Endothelial cell of umbilical vein (primary cell): ENCODE measurements at regions of chr1 and their contacts with region 1.

Region 1: DNA sequence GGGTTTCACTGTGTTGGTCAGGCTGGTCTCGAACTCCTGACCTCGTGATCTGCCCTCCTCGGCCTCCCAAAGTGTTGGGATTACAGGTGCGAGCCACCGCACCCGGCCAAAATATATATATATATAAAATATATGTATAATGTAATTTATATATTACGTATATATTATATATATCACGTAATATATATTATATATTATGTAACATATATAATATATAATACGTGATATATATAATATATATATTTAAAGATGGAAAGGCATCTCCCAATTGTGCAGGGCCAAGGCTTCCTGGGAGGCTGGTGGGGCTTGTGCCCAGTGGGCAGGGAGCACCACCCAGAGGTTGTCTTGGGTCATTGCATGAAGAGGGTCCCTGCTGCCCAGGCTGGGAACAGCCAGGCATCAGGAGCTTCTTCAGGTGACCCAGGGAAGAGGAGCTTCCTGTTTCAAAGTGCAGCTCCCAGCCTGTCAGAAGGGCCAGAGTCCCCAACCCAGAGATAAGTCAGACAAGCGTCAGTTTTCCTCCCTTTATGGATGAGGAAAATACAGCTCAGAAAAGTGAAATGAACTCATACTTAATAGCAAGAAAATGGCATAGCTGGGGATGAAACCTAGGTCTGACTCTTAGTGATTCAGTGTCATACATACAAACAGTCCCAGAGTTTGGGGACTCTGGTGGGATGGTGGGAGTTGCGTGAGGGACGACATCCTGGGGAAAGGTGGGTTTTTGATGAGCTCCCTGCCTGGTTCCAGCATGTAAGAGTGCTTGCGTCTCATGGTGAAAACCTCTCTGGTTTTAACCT is 12.0 kb downstream of the UBE2Q1 start:
- DNase-seq: peak; percentile 73
- H3K4me3 ChIP-seq: no peak overlapping the region
- H3K27ac ChIP-seq: no peak overlapping the region
- H3K4me1 ChIP-seq: peaks cover 6% of the 10 kb centered on the region
- H3K27me3 ChIP-seq: no peaks in the 10 kb centered on the region
- CTCF ChIP-seq: peak; percentile 74 to 88
- POLR2A ChIP-seq: no peak

Region 2: GRCh38 chr1:154324669-154325582 is 221.5 kb before region 1 on chr1 and contains the start of gene ATP8B2:
- CTCF ChIA-PET with region 1: interaction called, 5 read pairs
- POLR2A ChIA-PET with region 1: no interaction called
- dilution Hi-C with region 1: no loop called
- intact Hi-C with region 1: loop called (anchors 2 kb)
- DNase-seq: peak; percentile 79
- H3K4me3 ChIP-seq: peak within 1 kb of the TSS; percentile 78 to 88 (median 85)
- H3K27ac ChIP-seq: peak within 1 kb of the TSS; percentile 52
- H3K4me1 ChIP-seq: peaks cover 22% of the 10 kb centered on the region
- H3K27me3 ChIP-seq: peaks cover 0 to 8% of the 10 kb centered on the region in 2 experiments
- CTCF ChIP-seq: peak; percentile 93 to 94
- POLR2A ChIP-seq: no peak
- total RNA-seq, gene ATP8B2: 60.0 and 64.7 TPM in 2 replicates

Region 3: DNA sequence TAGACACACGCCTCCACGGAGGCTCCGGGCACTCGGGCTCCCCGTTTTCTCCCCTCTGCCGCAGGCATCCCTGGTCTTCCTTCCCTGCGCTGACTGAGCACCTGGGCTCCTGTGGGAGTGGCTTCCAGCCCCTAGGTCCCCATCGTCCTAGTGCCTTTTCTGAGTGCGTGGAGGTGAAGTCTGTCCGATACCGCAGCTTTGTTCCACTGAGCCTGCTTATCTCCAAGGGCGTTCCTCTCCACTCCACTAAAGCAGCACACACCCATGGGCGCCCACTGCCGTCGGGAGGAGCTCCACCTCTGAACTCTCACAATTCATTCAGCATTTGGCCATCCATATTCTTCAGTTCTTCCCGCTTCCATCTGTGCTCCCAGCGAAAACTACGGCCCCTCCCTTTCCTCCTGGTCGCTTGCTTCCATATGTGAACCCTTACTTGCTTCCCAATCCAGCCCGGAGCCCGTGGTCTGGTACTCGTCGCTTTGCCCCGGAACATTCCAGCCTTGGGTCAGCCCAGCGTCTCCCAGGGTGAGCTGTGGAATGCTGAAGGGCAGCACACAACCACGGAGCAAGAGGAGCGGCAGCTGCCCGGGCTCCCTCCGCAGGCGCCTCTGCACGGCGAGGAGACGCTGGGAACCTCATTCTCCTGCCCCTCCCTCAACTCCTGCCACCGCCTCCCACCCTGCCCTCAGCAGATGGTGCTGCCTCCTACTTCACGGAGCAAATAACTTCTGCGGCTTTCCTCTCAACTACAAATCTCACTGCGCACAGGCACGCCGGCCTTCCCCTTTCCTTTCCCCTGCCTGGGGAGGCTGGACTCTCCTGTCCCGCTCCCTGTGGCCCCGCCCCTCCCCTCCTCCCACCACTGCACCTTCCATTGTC is 193.6 kb before region 1 on chr1:
- CTCF ChIA-PET with region 1: interaction called, 13 read pairs
- POLR2A ChIA-PET with region 1: no interaction called
- dilution Hi-C with region 1: no loop called
- intact Hi-C with region 1: loop called (anchors 1 kb)
- DNase-seq: peak; percentile 56
- H3K4me3 ChIP-seq: peak overlapping the region in 2 of 3 experiments; percentile 19 to 46
- H3K27ac ChIP-seq: no peak overlapping the region
- H3K4me1 ChIP-seq: peaks cover 14% of the 10 kb centered on the region
- H3K27me3 ChIP-seq: no peaks in the 10 kb centered on the region
- CTCF ChIP-seq: peak in 1 of 2 donors; percentile 1
- POLR2A ChIP-seq: no peak

Region 4: DNA sequence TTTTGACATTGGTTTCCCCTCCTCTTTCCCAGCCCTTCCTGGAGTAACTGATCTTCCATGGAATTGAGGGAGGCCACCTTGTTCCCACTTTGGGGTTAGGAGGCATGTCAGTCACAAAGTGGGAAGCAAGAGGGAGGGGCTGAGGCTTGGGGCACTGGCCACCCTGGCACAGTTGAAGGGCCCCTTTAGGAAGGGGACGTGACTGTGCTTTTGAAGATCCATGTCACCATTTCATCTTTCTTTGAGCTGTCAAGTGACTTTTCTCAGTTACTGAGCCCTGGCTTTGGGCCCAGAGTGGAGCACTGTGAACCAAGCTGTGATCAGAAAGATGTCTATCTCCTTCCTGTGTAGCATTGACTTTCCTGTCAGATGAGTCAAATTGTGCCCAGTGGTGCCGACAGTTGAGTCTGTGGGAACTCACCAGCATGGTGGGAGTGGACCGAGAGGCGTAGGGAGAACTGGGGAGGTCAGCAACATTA is 82.9 kb before region 1 on chr1:
- CTCF ChIA-PET with region 1: interaction called, 15 read pairs
- POLR2A ChIA-PET with region 1: no interaction called
- dilution Hi-C with region 1: no loop called
- intact Hi-C with region 1: no loop called
- DNase-seq: peak; percentile 31
- H3K4me3 ChIP-seq: no peak overlapping the region
- H3K27ac ChIP-seq: peak overlapping the region; percentile 34
- H3K4me1 ChIP-seq: peaks cover 8% of the 10 kb centered on the region
- H3K27me3 ChIP-seq: no peaks in the 10 kb centered on the region
- CTCF ChIP-seq: no peak
- POLR2A ChIP-seq: no peak

Region 5: DNA sequence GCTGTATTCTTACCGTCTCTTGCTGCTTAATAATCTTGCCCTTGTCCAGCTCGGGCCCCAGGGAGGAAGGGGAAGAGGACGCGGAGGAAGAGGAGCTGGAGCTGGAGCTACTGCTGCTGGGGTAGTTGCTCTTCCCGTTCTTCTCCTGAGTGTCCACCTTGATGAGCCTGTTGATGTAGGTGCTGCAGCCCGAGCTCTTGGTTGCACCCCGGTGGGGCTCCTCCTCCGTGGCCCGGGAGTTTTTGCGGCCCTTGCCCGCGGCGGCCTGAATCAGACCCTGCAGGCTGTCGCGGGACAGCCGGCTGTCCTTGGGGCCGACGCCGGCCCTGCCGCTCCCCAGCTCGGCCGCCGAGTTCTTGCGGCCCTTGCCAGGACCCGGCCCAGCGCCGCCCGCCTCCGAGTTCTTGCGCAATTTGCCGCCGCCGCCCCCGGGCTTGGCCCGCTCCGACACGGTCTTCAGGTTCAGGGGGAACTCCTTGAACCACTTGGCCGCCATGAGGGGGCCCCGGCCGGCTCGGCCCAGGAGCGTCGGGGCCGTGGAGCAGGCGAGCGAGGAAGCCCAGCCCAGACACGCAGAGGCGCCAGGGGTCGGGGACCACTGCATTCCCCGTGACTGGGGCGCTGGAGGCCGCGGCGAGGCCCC is 44.9 kb before region 1 on chr1:
- CTCF ChIA-PET with region 1: interaction called, 66 read pairs
- POLR2A ChIA-PET with region 1: interaction called, 4 read pairs
- dilution Hi-C with region 1: no loop called
- intact Hi-C with region 1: loop called (anchors 1 kb)
- DNase-seq: peak; percentile 43
- H3K4me3 ChIP-seq: peak overlapping the region; percentile 73 to 99 (median 88)
- H3K27ac ChIP-seq: peak overlapping the region; percentile 74
- H3K4me1 ChIP-seq: peaks cover 34% of the 10 kb centered on the region
- H3K27me3 ChIP-seq: no peaks in the 10 kb centered on the region
- CTCF ChIP-seq: no peak
- POLR2A ChIP-seq: no peak

Region 6: GRCh38 chr1:154533952-154534844 is 12.3 kb before region 1 on chr1:
- CTCF ChIA-PET with region 1: interaction called, 19 read pairs
- POLR2A ChIA-PET with region 1: no interaction called
- dilution Hi-C with region 1: no loop called
- intact Hi-C with region 1: no loop called
- DNase-seq: no peak
- H3K4me3 ChIP-seq: no peak overlapping the region
- H3K27ac ChIP-seq: no peak overlapping the region
- H3K4me1 ChIP-seq: no peaks in the 10 kb centered on the region
- H3K27me3 ChIP-seq: no peaks in the 10 kb centered on the region
- CTCF ChIP-seq: peak; percentile 14 to 27
- POLR2A ChIP-seq: no peak

Region 7: DNA sequence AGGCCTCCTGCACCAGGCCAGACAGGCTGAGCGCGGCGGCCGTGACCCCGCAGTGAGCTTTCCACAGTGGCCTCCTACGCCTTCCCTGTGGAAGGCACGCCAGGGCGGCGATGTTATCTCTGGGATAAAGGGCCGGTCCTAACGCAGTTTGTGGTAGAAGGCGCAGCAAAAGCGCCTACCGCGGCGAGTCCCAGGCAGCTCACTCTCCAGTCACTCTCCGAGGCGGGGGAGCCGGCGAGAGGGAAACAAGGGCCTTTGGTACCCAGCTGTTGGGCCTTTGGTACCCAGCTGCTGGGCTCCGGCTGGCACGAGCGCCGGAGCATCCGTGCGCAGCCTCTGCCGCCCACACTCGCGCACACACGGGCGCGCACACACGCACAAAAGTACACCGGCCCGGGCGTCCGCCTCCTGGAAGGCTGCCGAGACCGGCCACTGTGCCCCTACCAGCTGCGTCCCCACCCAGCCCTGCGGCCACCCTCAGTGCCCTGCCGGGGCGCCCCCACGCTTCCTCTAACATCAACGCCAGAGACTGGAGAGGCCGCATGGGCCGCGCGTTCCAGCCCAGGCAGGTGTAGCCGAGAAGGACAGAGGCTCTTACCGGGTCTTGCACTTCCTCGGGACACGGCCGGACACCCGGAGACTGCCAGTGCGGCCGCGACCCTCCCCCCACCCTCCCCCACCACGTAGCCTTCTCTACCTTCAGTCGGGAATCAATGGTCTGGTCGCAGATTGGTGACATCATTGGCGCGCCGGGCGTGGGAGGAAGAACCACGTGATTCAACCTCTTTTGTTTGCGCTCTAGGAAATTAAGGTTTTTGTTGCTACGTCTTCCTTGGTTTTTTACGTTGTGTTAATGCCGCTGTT is 81.0 kb after region 1 on chr1:
- CTCF ChIA-PET with region 1: no interaction called
- POLR2A ChIA-PET with region 1: no interaction called
- dilution Hi-C with region 1: no loop called
- intact Hi-C with region 1: no loop called
- DNase-seq: peak; percentile 89
- H3K4me3 ChIP-seq: peak overlapping the region; percentile 72 to 99 (median 73)
- H3K27ac ChIP-seq: peak overlapping the region; percentile 86
- H3K4me1 ChIP-seq: peaks cover 7% of the 10 kb centered on the region
- H3K27me3 ChIP-seq: peaks cover 3 to 13% of the 10 kb centered on the region in 2 experiments
- CTCF ChIP-seq: no peak
- POLR2A ChIP-seq: no peak

Region 8: GRCh38 chr1:154736841-154737240 is 190.4 kb after region 1 on chr1:
- CTCF ChIA-PET with region 1: no interaction called
- POLR2A ChIA-PET with region 1: no interaction called
- dilution Hi-C with region 1: no loop called
- intact Hi-C with region 1: no loop called
- DNase-seq: no peak
- H3K4me3 ChIP-seq: no peak overlapping the region
- H3K27ac ChIP-seq: no peak overlapping the region
- H3K4me1 ChIP-seq: peaks cover 8% of the 10 kb centered on the region
- H3K27me3 ChIP-seq: peaks cover 10 to 26% of the 10 kb centered on the region in 2 experiments
- CTCF ChIP-seq: no peak
- POLR2A ChIP-seq: no peak